Right cardiac atrium (tissue), 5 donors: ENCODE measurements at regions of chr10 and their contacts with region 1.

Region 1: DNA sequence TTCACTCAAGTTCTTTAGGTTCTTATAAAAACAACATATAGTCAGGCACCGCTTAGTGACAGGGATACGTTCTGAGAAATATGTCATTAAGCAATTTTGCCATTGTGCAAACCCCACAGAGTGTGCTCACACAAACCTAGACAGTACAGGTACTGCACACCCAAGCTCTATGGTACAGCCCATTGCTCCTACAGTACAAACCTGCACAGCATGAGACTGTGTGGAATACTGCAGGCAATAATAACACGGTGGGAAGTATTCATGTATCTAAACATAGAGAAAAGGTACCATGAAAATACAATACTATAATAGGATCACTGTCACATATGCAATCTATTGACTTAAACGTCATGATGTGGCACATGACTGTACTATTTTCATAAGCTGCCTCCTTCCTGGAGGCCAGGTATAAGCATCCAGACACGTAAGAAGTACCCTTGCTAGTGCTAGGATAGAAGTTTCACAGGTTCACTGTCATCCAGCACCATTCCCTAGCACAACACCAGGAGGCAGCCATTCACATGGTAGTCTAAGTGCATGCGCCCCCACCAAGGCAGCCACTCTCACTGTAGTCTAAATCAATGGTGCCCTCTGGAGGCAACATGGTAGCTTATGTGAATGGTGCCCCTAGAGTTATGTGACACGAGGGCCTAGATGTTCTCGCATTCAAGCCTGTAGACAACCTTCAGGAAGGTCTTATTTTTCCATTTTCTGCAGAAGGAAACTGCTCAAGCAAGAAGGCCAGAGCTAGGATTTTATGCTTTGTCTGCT is 98.5 kb downstream of the ARHGAP22 start:
- DNase-seq: no peak
- ATAC-seq: no peak
- H3K4me3 ChIP-seq: no peak overlapping the region
- H3K27ac ChIP-seq: no peak overlapping the region
- H3K4me1 ChIP-seq: peaks cover 7% of the 10 kb centered on the region
- H3K27me3 ChIP-seq: no peaks in the 10 kb centered on the region

Region 2: DNA sequence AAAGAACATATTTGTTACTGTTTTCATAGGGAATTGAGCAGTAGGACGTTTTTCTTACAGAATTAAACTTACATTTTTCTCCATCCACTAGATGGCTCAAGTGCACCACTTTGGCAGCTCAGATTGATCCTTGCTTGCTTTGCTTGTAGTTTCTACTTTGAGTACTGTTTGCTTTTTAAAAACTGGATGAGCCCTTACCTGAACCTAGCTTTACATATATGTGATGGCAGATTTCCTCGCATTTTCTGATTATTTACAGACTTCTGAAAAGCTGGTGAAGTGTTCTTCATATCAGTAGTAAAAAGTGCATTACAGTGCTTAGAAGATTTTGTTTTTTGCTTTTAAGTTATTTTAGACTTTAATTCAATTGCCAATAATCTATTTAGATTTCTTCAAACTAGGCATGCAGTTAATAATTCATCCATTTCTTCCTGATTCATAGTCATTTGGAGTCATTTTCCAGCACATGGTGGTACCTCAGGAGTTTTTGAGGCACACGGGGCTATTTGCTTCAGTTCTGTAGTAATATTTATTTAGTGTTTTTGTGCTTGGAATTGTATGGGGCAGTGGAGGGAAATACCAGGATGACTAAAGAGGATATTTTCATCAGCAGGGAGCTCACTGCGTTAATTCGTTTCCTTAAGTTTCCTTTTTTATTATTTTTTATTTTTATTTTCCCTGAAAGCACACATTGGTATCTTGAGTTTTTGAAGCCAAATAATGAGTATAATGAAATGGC is 142.5 kb before region 1 on chr10:
- intact Hi-C with region 1: loop called in 1 of 4 experiments (anchors 5 kb)
- DNase-seq: no peak
- ATAC-seq: peak; percentile 63 to 67
- H3K4me3 ChIP-seq: no peak overlapping the region
- H3K27ac ChIP-seq: no peak overlapping the region
- H3K4me1 ChIP-seq: peaks cover under 1% of the 10 kb centered on the region
- H3K27me3 ChIP-seq: no peaks in the 10 kb centered on the region

Region 3: GRCh38 chr10:48377751-48378535 is 128.4 kb before region 1 on chr10:
- intact Hi-C with region 1: loop called in 1 of 4 experiments (anchors 10 kb)
- DNase-seq: no peak
- ATAC-seq: no peak
- H3K4me3 ChIP-seq: no peak overlapping the region
- H3K27ac ChIP-seq: no peak overlapping the region
- H3K4me1 ChIP-seq: no peaks in the 10 kb centered on the region
- H3K27me3 ChIP-seq: no peaks in the 10 kb centered on the region